PC-3 (cell line): ENCODE measurements at regions of chr3 and their contacts with region 1.

Region 1: DNA sequence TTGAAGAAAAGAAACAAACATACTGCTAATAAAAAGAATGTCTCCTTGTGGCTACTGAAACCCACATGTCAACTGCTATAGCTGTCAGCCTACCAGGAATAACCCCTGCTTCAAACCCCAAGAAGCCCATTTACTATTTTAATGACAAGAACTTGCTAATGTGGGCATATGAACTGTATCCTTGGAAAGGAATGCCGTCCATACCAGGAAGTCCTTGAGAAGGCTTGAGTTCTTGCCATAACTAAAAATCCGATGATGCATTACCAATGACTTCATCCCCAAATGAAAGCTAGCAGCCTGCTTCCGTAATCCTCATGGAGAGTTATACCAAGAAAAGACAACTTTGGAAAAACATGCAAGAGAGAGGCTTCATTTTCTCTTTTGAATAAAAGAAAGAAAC is 34.8 kb downstream of the MINDY4B start:
- DNase-seq: no peak
- ATAC-seq: no peak
- H3K4me3 ChIP-seq: no peak overlapping the region
- H3K27ac ChIP-seq: no peak overlapping the region
- H3K4me1 ChIP-seq: no peaks in the 10 kb centered on the region
- H3K27me3 ChIP-seq: peaks cover 15% of the 10 kb centered on the region; the same call in 1 of the 2 replicates
- CTCF ChIP-seq: no peak

Region 2: GRCh38 chr3:150528354-150528797 is 342.0 kb before region 1 on chr3:
- CTCF ChIA-PET with region 1: no interaction called
- POLR2A ChIA-PET with region 1: no interaction called
- intact Hi-C with region 1: loop called (anchors 5 kb)
- DNase-seq: peak; percentile 56
- ATAC-seq: no peak; the same call in 1 of the 2 replicates
- H3K4me3 ChIP-seq: no peak overlapping the region
- H3K27ac ChIP-seq: no peak overlapping the region
- H3K4me1 ChIP-seq: no peaks in the 10 kb centered on the region
- H3K27me3 ChIP-seq: no peaks in the 10 kb centered on the region
- CTCF ChIP-seq: peak; percentile 61

Region 3: GRCh38 chr3:150589759-150590158 is 280.6 kb before region 1 on chr3:
- CTCF ChIA-PET with region 1: no interaction called
- POLR2A ChIA-PET with region 1: no interaction called
- intact Hi-C with region 1: loop called (anchors 1 kb)
- DNase-seq: no peak
- ATAC-seq: peak; percentile 52
- H3K4me3 ChIP-seq: no peak overlapping the region
- H3K27ac ChIP-seq: no peak overlapping the region
- H3K4me1 ChIP-seq: no peaks in the 10 kb centered on the region
- H3K27me3 ChIP-seq: no peaks in the 10 kb centered on the region
- CTCF ChIP-seq: no peak

Region 4: GRCh38 chr3:150721285-150722130 is 148.9 kb before region 1 on chr3:
- CTCF ChIA-PET with region 1: interaction called, 11 read pairs
- POLR2A ChIA-PET with region 1: no interaction called
- intact Hi-C with region 1: loop called (anchors 1 kb)
- DNase-seq: peak; percentile 86
- ATAC-seq: peak; percentile 61
- H3K4me3 ChIP-seq: no peak overlapping the region
- H3K27ac ChIP-seq: no peak overlapping the region
- H3K4me1 ChIP-seq: peaks cover 13% of the 10 kb centered on the region
- H3K27me3 ChIP-seq: no peaks in the 10 kb centered on the region
- CTCF ChIP-seq: peak; percentile 94

Region 5: GRCh38 chr3:150787741-150788370 is 82.5 kb before region 1 on chr3:
- CTCF ChIA-PET with region 1: interaction called, 15 read pairs
- POLR2A ChIA-PET with region 1: no interaction called
- intact Hi-C with region 1: loop called (anchors 1 kb)
- DNase-seq: peak; percentile 86
- ATAC-seq: peak; percentile 71
- H3K4me3 ChIP-seq: no peak overlapping the region
- H3K27ac ChIP-seq: no peak overlapping the region
- H3K4me1 ChIP-seq: peaks cover 45% of the 10 kb centered on the region
- H3K27me3 ChIP-seq: no peaks in the 10 kb centered on the region
- CTCF ChIP-seq: peak; percentile 98